SK-N-SH (cell line): ENCODE measurements at regions of chr3 and their contacts with region 1.

Region 1: GRCh38 chr3:66138336-66139313 is 82.2 kb upstream of the SLC25A26 start:
- DNase-seq: peak; percentile 72
- H3K4me3 ChIP-seq: no peak overlapping the region
- H3K27ac ChIP-seq: no peak overlapping the region
- H3K4me1 ChIP-seq: peaks cover 5% of the 10 kb centered on the region in 2 experiments; a peak in 3 of 4 replicates
- H3K27me3 ChIP-seq: no peaks in the 10 kb centered on the region
- CTCF ChIP-seq: peak; percentile 89
- EP300 ChIP-seq: no peak
- RAD21 ChIP-seq: peak; percentile 97

Region 2: GRCh38 chr3:65785065-65785645 is 353.5 kb before region 1 on chr3:
- CTCF ChIA-PET with region 1: interaction called, 70 read pairs
- POLR2A ChIA-PET with region 1: no interaction called
- DNase-seq: peak; percentile 57
- H3K4me3 ChIP-seq: peak overlapping the region in 1 of 2 experiments; percentile 5; a peak in 1 of 4 replicates
- H3K27ac ChIP-seq: peak overlapping the region in 1 of 2 experiments; percentile 72; a peak in 2 of 4 replicates
- H3K4me1 ChIP-seq: no peaks in the 10 kb centered on the region; a peak in 1 of 4 replicates
- H3K27me3 ChIP-seq: no peaks in the 10 kb centered on the region
- CTCF ChIP-seq: peak; percentile 93
- EP300 ChIP-seq: no peak
- RAD21 ChIP-seq: peak; percentile 88

Region 3: GRCh38 chr3:66092175-66092995 is 46.2 kb before region 1 on chr3:
- CTCF ChIA-PET with region 1: interaction called, 10 read pairs
- POLR2A ChIA-PET with region 1: no interaction called
- DNase-seq: peak; percentile 37
- H3K4me3 ChIP-seq: peak overlapping the region; percentile 2 to 43; a peak in 3 of 4 replicates
- H3K27ac ChIP-seq: peak overlapping the region; percentile 29 to 58; a peak in 3 of 4 replicates
- H3K4me1 ChIP-seq: peaks cover 3 to 6% of the 10 kb centered on the region in 2 experiments; a peak in 2 of 4 replicates
- H3K27me3 ChIP-seq: no peaks in the 10 kb centered on the region
- CTCF ChIP-seq: no peak
- EP300 ChIP-seq: peak; percentile 38 to 85; a peak in 3 of 4 replicates
- RAD21 ChIP-seq: no peak

Region 4: GRCh38 chr3:66128623-66129022 is 10.0 kb before region 1 on chr3:
- CTCF ChIA-PET with region 1: interaction called, 40 read pairs
- POLR2A ChIA-PET with region 1: no interaction called
- DNase-seq: no peak
- H3K4me3 ChIP-seq: no peak overlapping the region
- H3K27ac ChIP-seq: no peak overlapping the region
- H3K4me1 ChIP-seq: peaks cover 0 to 13% of the 10 kb centered on the region in 2 experiments; a peak in 1 of 4 replicates
- H3K27me3 ChIP-seq: no peaks in the 10 kb centered on the region
- CTCF ChIP-seq: no peak
- EP300 ChIP-seq: no peak
- RAD21 ChIP-seq: no peak

Region 5: DNA sequence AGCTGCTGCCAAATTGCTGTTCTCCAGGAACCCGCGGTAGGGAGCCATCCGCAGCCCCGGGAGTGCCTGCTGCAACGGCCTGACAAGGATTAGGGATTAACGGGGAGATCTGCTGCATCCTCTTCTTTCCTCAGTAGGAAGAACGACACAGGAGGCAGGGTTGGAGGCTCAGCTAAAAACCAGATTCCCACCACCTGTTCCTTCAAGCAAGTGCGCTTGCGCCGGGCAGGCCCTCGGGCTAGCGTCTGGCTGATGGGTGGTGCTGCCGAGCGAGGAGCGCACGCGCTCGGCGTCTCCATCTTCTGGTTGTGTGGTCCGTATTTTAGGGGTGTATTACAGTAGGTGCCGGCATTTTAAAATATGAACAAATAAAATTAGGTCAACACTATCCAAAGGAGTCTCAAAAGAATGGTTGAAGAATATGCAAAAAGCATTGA is 56.7 kb after region 1 on chr3:
- CTCF ChIA-PET with region 1: interaction called, 21 read pairs
- POLR2A ChIA-PET with region 1: no interaction called
- DNase-seq: peak; percentile 87
- H3K4me3 ChIP-seq: peak overlapping the region; percentile 43 to 47
- H3K27ac ChIP-seq: no peak overlapping the region
- H3K4me1 ChIP-seq: peaks cover 3 to 5% of the 10 kb centered on the region in 2 experiments; a peak in 2 of 4 replicates
- H3K27me3 ChIP-seq: no peaks in the 10 kb centered on the region
- CTCF ChIP-seq: peak; percentile 50
- EP300 ChIP-seq: no peak
- RAD21 ChIP-seq: peak; percentile 54